ENCODE measurements at regions of chr9 and their contacts with region 1.

Region 1: DNA sequence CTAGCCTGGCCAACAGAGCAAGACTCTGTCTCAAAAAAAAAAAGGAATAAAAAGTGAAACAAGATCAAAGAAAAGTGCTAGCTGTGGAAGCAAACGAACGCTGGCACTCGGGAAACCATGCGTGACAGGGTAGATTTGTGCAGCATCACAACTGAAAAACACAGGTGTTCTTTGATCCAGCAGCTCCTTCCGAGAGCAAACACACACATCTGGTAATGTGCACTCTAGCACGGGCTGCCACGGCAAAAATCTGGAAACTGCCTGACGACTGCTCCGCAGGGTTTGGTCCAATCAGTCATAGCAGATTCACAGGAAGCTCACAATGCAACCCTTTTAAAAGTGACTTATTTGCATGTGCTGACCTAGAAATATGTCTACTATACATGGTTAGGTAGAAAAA is 80.0 kb downstream of the SYK start:
- DNase-seq: no peak
- ATAC-seq: no peak

Region 2: GRCh38 chr9:89597711-89598625 is 1283.7 kb before region 1 on chr9:
- intact Hi-C with region 1: loop called (anchors 10 kb)
- DNase-seq: no peak
- ATAC-seq: peak; percentile 73

Region 3: GRCh38 chr9:90842996-90843395 is 38.7 kb before region 1 on chr9:
- intact Hi-C with region 1: no loop called
- DNase-seq: peak; percentile 39
- ATAC-seq: no peak

Measured in Right ventricle myocardium superior (tissue), 1 donor.